Heart left ventricle (tissue), 16 donors: ENCODE measurements at regions of chr1 and their contacts with region 1.

Region 1: GRCh38 chr1:184827600-184828368 is 73.1 kb upstream of the EDEM3 start:
- DNase-seq: no peak
- ATAC-seq: peak; percentile 85 to 90 (median 88)
- H3K4me3 ChIP-seq: no peak overlapping the region
- H3K27ac ChIP-seq: peak overlapping the region; percentile 50 to 96 (median 86)
- H3K4me1 ChIP-seq: peaks cover 5 to 72% (median 51%) of the 10 kb centered on the region in 12 donors
- H3K27me3 ChIP-seq: no peaks in the 10 kb centered on the region
- CTCF ChIP-seq: no peak
- POLR2A ChIP-seq: no peak

Region 2: GRCh38 chr1:184860985-184861759 is 33.4 kb after region 1 on chr1:
- intact Hi-C with region 1: loop called in 1 of 10 experiments (anchors 5 kb)
- DNase-seq: peak in 1 of 5 donors; percentile 33
- ATAC-seq: peak in 2 of 4 donors; percentile 56 to 74
- H3K4me3 ChIP-seq: no peak overlapping the region
- H3K27ac ChIP-seq: peak overlapping the region in 7 of 12 donors; percentile 5 to 37 (median 19)
- H3K4me1 ChIP-seq: peaks cover 0 to 34% (median 10%) of the 10 kb centered on the region in 12 donors
- H3K27me3 ChIP-seq: no peaks in the 10 kb centered on the region
- CTCF ChIP-seq: no peak
- POLR2A ChIP-seq: no peak

Region 3: GRCh38 chr1:184870319-184870718 is 42.5 kb after region 1 on chr1:
- intact Hi-C with region 1: loop called in 3 of 10 experiments (anchors 5 to 10 kb)
- DNase-seq: no peak
- ATAC-seq: no peak
- H3K4me3 ChIP-seq: no peak overlapping the region
- H3K27ac ChIP-seq: no peak overlapping the region
- H3K4me1 ChIP-seq: peaks cover 0 to 42% (median 13%) of the 10 kb centered on the region in 12 donors
- H3K27me3 ChIP-seq: no peaks in the 10 kb centered on the region
- CTCF ChIP-seq: no peak
- POLR2A ChIP-seq: no peak

Region 4: DNA sequence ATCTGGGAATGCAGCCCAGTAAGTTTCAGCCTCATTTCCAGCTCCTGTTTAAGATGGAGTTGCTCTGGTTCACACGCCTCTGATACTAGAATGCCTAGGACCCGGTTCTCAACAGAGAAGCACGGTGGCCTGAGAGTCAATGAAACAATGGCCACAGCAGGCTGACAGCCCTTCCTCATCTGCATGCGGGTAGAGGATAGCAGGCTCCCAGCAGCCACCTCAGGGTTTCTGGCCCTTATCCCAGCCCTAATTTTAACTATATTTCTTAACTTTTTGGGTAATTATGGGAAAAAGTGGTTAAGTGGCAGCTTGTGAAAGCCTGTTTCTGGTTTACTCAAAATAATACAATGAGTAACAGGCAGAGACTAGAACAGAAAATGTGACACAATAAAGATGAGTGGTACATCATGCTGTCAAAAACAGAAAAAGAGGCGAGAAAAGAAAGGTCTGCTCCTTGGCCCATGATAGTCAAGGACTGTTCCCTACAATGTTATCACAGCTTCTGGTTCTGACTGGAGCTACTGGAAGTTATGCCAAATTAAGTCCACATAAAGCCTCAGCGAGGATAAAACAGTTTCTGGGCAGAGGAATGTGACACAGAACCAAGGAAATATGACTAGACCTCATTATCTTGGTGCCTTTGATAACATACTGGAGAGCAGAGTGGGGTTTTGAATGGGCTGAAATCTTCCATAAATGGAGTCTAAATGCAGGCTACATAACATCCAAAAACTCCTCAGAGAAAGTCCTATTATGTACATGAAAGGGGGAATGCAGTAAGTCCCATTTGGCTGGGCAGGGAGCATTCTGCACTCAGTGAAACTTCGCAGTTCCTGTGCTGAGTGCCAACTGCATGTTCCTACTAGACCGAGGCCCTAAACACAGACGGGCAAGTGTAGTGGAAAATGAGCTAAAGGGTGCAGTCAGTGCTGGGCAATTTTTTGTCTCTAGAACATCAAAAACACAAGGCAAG is 54.4 kb after region 1 on chr1:
- intact Hi-C with region 1: loop called in 4 of 10 experiments (anchors 5 to 10 kb)
- DNase-seq: peak in 4 of 5 donors; percentile 44 to 63 (median 60)
- ATAC-seq: peak; percentile 77 to 86 (median 82)
- H3K4me3 ChIP-seq: peak overlapping the region in 1 of 12 donors; percentile 3
- H3K27ac ChIP-seq: peak overlapping the region; percentile 52 to 91 (median 78)
- H3K4me1 ChIP-seq: peaks cover 3 to 97% (median 64%) of the 10 kb centered on the region in 12 donors
- H3K27me3 ChIP-seq: no peaks in the 10 kb centered on the region
- CTCF ChIP-seq: no peak
- POLR2A ChIP-seq: no peak

Region 5: GRCh38 chr1:184892116-184892515 is 64.3 kb after region 1 on chr1:
- intact Hi-C with region 1: loop called in 1 of 10 experiments (anchors 5 kb)
- DNase-seq: no peak
- ATAC-seq: no peak
- H3K4me3 ChIP-seq: no peak overlapping the region
- H3K27ac ChIP-seq: peak overlapping the region in 11 of 12 donors; percentile 8 to 90 (median 81)
- H3K4me1 ChIP-seq: peaks cover 0 to 84% (median 52%) of the 10 kb centered on the region in 12 donors
- H3K27me3 ChIP-seq: no peaks in the 10 kb centered on the region
- CTCF ChIP-seq: no peak
- POLR2A ChIP-seq: no peak

Region 6: DNA sequence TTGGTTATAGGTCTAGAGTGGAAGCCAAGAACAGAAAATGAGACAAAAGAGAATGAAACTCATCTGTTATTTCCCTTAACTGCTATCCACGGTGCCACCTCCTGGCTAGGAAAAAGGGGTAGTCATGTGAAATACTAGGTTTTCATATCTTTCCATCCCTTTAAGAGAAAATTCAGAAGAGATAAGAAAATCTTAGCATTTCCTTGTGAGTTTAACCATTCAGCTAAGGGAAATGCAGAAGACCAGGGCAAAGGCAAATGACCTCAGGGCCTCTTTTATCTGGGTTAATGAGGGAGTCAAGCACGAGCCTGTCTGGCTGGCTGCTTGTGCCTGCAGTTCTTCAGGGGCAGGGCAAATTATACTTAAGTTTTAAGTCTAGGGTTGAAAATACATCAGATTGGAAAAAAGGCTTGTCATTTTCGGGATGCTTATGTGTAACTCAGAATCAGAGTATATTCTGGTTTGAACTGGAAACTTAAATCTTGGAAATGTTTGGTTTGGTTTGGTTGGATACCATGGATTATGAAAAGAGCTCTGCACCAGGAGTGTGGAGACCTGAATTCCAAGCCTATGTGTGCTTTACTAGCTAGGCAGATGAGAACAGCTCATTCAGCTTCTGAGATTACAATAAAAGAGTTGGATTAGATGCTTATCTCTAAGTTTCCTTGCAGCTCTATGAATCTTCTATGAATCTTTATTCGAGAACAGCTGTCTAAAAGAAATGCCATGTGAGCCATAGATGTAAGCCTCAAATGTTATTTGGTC is 126.6 kb after region 1 on chr1:
- intact Hi-C with region 1: loop called in 2 of 10 experiments (anchors 5 kb)
- DNase-seq: no peak
- ATAC-seq: peak in 3 of 4 donors; percentile 37 to 42 (median 41)
- H3K4me3 ChIP-seq: no peak overlapping the region
- H3K27ac ChIP-seq: peak overlapping the region; percentile 24 to 77 (median 58)
- H3K4me1 ChIP-seq: peaks cover 0 to 66% (median 28%) of the 10 kb centered on the region in 12 donors
- H3K27me3 ChIP-seq: no peaks in the 10 kb centered on the region
- CTCF ChIP-seq: peak in 1 of 12 donors; percentile 10
- POLR2A ChIP-seq: no peak

Region 7: GRCh38 chr1:184973272-184974055 is 145.7 kb after region 1 on chr1:
- intact Hi-C with region 1: loop called in 2 of 10 experiments (anchors 5 kb)
- DNase-seq: peak; percentile 51 to 74 (median 68)
- ATAC-seq: peak; percentile 10 to 76 (median 60)
- H3K4me3 ChIP-seq: peak overlapping the region; percentile 65 to 98 (median 83)
- H3K27ac ChIP-seq: peak overlapping the region; percentile 74 to 94 (median 92)
- H3K4me1 ChIP-seq: peaks cover 0 to 52% (median 20%) of the 10 kb centered on the region in 12 donors
- H3K27me3 ChIP-seq: no peaks in the 10 kb centered on the region
- CTCF ChIP-seq: no peak
- POLR2A ChIP-seq: no peak